ENCODE measurements at regions of chr9 and their contacts with region 1.

Region 1: GRCh38 chr9:109145066-109145465 is 22.0 kb downstream of the FRRS1L start:
- DNase-seq: no peak
- H3K4me3 ChIP-seq: no peak overlapping the region
- H3K27ac ChIP-seq: no peak overlapping the region
- H3K4me1 ChIP-seq: peaks cover 0 to 2% (median 0%) of the 10 kb centered on the region in 4 donors
- H3K27me3 ChIP-seq: no peaks in the 10 kb centered on the region
- CTCF ChIP-seq: no peak
- EP300 ChIP-seq: no peak
- POLR2A ChIP-seq: no peak

Region 2: GRCh38 chr9:108823829-108824228 is 321.2 kb before region 1 on chr9:
- in situ Hi-C with region 1: no loop called
- intact Hi-C with region 1: no loop called
- DNase-seq: no peak
- H3K4me3 ChIP-seq: no peak overlapping the region
- H3K27ac ChIP-seq: no peak overlapping the region
- H3K4me1 ChIP-seq: no peaks in the 10 kb centered on the region
- H3K27me3 ChIP-seq: no peaks in the 10 kb centered on the region
- CTCF ChIP-seq: no peak
- EP300 ChIP-seq: no peak
- POLR2A ChIP-seq: no peak

Region 3: DNA sequence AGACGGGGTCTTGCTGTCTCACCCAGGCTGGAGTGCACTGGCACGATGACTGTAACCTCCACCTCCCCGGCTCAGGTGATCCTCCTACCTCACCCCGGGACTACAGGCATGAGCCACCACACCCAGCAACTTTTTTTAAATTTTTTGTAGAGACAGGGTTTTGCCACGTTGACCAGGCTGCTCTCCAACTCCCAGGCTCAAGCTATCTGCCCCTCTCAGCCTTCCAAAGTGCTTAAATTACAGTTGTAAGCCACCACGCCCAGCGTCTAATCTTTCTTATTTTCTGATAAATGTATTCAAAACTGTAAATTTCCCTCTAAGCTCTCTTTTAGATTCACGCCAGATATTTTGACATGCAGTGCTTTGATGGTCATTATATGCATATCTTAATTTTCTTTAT is 11.6 kb after region 1 on chr9:
- in situ Hi-C with region 1: no loop called
- intact Hi-C with region 1: loop called (anchors 1 kb)
- DNase-seq: no peak
- H3K4me3 ChIP-seq: no peak overlapping the region
- H3K27ac ChIP-seq: no peak overlapping the region
- H3K4me1 ChIP-seq: no peaks in the 10 kb centered on the region
- H3K27me3 ChIP-seq: no peaks in the 10 kb centered on the region
- CTCF ChIP-seq: no peak
- EP300 ChIP-seq: no peak
- POLR2A ChIP-seq: no peak

Measured in transverse colon (tissue), 4 donors.